ENCODE measurements at regions of chr20 and their contacts with region 1.

Region 1: GRCh38 chr20:41617931-41618806 is at the start of gene CHD6:
- DNase-seq: peak; percentile 100
- ATAC-seq: peak; percentile 99
- H3K4me3 ChIP-seq: peak within 1 kb of the TSS; percentile 100
- H3K27ac ChIP-seq: peak within 1 kb of the TSS; percentile 96
- H3K4me1 ChIP-seq: peaks cover 5% of the 10 kb centered on the region
- H3K27me3 ChIP-seq: no peaks in the 10 kb centered on the region
- total RNA-seq, gene CHD6: 46.8 to 53.9 (median 50.5) TPM

Region 2: DNA sequence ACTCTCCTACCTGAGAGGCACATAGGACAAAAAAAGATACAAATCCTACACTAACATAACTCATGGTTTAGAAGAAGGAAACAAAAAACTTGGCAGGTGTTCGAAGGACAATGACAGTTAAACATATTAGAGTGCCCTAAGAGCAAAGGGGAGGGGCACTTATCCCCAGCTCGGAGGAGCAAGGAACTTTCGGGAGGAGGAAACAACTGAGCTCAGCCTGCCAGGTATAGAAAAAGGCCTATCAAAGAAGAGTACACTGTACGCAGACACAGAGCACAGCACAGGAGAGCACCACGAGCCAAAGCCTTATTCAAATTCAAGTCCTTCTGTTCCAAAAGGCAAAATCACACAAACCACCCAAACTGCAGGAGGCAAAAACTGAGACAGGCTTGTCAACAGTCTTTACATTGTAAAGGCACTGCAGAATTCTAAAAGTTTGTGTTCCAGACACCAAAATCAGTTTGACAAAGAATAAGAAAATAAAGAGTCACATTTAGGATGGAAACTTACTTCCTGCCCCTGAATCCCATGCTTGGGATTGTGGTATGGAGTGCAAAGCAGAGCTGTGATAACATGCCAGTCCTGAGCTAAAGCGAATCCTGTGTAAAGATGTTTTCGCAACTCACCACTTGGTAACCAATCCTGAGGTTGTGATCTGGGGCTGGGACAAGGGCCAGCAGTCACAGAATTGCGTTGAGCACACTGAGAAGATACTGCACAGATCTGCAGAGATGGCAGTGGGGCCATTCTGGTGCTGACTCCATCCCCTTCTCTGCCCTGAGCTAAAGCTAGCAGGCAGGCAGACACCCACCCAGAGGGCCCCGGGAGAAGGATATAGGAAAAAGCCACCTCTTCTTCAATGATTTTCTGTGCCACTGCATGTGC is 108.6 kb before region 1 on chr20:
- intact Hi-C with region 1: loop called in 2 of 4 experiments (anchors 10 kb)
- DNase-seq: peak; percentile 64 to 79 (median 73)
- ATAC-seq: peak; percentile 77 to 83
- H3K4me3 ChIP-seq: no peak overlapping the region
- H3K27ac ChIP-seq: peak overlapping the region; percentile 85
- H3K4me1 ChIP-seq: peaks cover 12% of the 10 kb centered on the region
- H3K27me3 ChIP-seq: no peaks in the 10 kb centered on the region